ENCODE measurements at regions of chr11 and their contacts with region 1.

Region 1: DNA sequence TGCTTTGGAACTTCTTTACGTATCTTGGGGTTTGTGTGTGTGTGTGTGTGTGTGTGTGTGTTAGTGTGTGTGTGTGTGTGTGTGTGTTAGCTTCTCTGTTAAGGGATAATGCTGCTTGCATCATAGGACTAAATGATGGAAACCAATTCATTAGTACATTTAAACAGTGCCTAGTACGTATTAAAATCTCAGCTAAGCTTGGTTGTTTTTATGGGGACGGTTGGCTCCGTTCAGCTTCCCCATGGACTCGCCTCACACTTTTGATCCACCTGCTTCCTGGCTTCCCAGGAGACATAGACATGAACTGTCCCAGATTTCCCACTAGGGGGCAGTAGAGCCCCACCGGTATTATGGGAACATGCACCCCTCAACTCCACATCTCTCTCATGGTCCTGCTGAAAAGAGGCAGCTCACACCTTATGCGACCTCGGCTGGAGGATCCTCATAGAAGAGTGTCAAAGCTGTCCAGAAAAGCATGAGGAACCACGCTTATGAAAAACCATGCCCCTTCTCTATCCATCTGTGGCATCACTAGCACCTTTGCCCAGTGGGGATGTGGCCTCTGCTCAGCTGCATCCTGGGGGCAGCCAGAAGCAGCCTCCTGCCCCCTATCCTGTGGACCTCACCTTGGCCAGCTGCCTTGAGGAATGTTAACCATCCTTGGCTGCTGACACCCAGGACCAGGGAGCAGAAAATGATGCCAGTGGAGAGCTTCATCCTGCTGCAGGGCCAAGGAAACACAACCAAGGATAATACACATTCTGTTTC is 9.7 kb upstream of the SAAL1 start:
- DNase-seq: peak; percentile 73
- ATAC-seq: peak; percentile 94
- H3K4me3 Mint-ChIP-seq: no peak overlapping the region
- H3K27ac Mint-ChIP-seq: no peak overlapping the region
- H3K4me1 Mint-ChIP-seq: no peaks in the 10 kb centered on the region
- H3K27me3 Mint-ChIP-seq: peaks cover 29% of the 10 kb centered on the region

Region 2: GRCh38 chr11:17991783-17992433 is 123.6 kb before region 1 on chr11:
- CTCF ChIA-PET with region 1: interaction called, 18 read pairs
- POLR2A ChIA-PET with region 1: no interaction called
- DNase-seq: peak; percentile 64
- ATAC-seq: peak; percentile 72
- H3K4me3 Mint-ChIP-seq: no peak overlapping the region
- H3K27ac Mint-ChIP-seq: no peak overlapping the region
- H3K4me1 Mint-ChIP-seq: no peaks in the 10 kb centered on the region
- H3K27me3 Mint-ChIP-seq: no peaks in the 10 kb centered on the region

Region 3: GRCh38 chr11:18056561-18057181 is 58.9 kb before region 1 on chr11:
- CTCF ChIA-PET with region 1: no interaction called
- POLR2A ChIA-PET with region 1: no interaction called
- DNase-seq: no peak
- ATAC-seq: no peak
- H3K4me3 Mint-ChIP-seq: no peak overlapping the region
- H3K27ac Mint-ChIP-seq: no peak overlapping the region
- H3K4me1 Mint-ChIP-seq: no peaks in the 10 kb centered on the region
- H3K27me3 Mint-ChIP-seq: peaks cover 5% of the 10 kb centered on the region

Region 4: DNA sequence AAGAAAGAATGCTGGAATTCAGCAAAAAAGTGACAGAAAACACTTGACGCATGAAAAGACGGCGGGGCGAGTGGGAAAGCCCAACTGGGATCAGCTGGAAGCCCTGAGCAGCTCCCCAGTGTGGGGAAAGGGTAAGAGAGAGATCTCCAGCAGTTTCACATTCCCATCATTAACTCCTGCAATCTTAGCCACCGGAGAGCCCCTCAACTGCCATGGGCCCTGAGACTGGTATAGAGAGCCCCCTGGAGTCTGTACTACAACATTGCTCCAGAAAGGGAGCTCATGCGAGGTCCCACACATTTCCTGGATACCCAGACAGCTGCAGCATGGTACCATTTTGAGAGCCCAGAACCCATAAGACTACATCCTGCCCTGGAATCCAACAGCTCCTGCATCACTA is 88.2 kb after region 1 on chr11:
- CTCF ChIA-PET with region 1: interaction called, 19 read pairs
- POLR2A ChIA-PET with region 1: no interaction called
- DNase-seq: peak; percentile 26
- ATAC-seq: no peak
- H3K4me3 Mint-ChIP-seq: no peak overlapping the region
- H3K27ac Mint-ChIP-seq: no peak overlapping the region
- H3K4me1 Mint-ChIP-seq: peaks cover 2% of the 10 kb centered on the region
- H3K27me3 Mint-ChIP-seq: peaks cover 42% of the 10 kb centered on the region

Region 5: DNA sequence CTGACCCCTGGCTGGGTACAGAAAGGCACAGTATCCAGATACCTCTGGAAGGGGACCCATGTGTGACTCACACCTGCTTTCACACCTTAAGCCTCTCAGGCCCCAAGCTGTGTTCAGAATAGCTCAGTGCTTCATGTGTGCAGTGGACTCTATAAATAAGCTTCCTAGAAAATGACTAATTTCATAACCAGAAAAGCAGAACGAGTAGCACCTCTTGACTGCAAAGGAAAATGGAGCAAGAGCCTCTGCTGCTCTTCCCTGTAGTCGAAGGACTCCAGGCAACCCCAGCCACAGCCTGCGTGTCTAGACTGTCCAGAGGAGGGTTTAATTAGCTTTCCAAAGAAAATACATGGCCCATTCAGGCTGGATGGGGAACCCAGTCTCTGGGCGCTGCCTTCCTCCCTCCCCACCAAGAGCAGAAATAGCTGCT is 652.9 kb after region 1 on chr11:
- CTCF ChIA-PET with region 1: interaction called, 19 read pairs
- POLR2A ChIA-PET with region 1: no interaction called
- DNase-seq: no peak
- ATAC-seq: peak; percentile 32
- H3K4me3 Mint-ChIP-seq: no peak overlapping the region
- H3K27ac Mint-ChIP-seq: no peak overlapping the region
- H3K4me1 Mint-ChIP-seq: peaks cover 29% of the 10 kb centered on the region
- H3K27me3 Mint-ChIP-seq: peaks cover 18% of the 10 kb centered on the region

Measured in activated CD8-positive, alpha-beta T cell treated with anti-CD3 and anti-CD28 coated beads, Interleukin-2, amount 10 ng/mL, durations not matched to agents 7 days and 5 days (primary cell).